ENCODE measurements at regions of chr13 and their contacts with region 1.

Region 1: DNA sequence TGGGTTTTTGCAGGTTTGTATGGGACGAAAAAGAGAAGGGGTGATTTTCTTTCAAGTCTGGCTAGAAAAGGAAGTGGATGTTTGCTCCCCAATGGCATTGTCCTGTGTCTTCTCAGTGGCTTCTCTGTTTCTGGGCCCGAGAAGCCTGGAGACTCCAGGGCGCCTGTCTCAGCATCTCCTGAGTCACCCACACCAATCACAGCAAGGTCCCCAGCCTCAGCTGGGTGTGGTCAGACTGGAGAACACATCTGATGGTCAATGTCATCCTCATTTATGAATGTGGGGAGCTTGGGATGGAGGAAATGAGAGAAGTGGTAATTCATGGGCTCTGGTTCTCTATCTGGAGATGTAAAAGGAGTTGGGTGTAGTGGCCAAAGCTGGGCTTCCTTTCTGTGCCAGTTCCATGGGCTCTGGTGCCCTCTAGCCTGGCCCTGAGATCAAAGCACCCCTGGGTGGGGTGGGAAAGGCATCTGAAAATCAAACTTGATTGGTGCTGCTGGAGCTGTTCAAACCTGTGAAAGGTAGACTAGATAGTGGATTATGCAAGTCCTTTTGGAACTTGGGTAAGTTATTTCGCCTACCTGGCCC is 13.4 kb downstream of the RASL11A start:
- DNase-seq: no peak
- H3K4me3 ChIP-seq: no peak overlapping the region
- H3K27me3 ChIP-seq: 0 out of 2 replicates have a peak, but pooled peaks cover 1% of the 10 kb centered on the region
- CTCF ChIP-seq: peak; percentile 57

Region 2: GRCh38 chr13:26946684-26947343 is 337.2 kb before region 1 on chr13:
- CTCF ChIA-PET with region 1: interaction called, 11 read pairs
- POLR2A ChIA-PET with region 1: no interaction called
- DNase-seq: no peak
- H3K4me3 ChIP-seq: no peak overlapping the region
- H3K27me3 ChIP-seq: 0 out of 2 replicates have a peak, but pooled peaks cover 1% of the 10 kb centered on the region
- CTCF ChIP-seq: peak; percentile 80

Region 3: GRCh38 chr13:27182844-27183497 is 101.0 kb before region 1 on chr13:
- CTCF ChIA-PET with region 1: no interaction called
- POLR2A ChIA-PET with region 1: no interaction called
- DNase-seq: peak; percentile 69
- H3K4me3 ChIP-seq: no peak overlapping the region
- H3K27me3 ChIP-seq: no peaks in the 10 kb centered on the region
- CTCF ChIP-seq: no peak

Region 4: GRCh38 chr13:27242706-27243105 is 41.3 kb before region 1 on chr13:
- CTCF ChIA-PET with region 1: no interaction called
- POLR2A ChIA-PET with region 1: no interaction called
- DNase-seq: no peak
- H3K4me3 ChIP-seq: no peak overlapping the region
- H3K27me3 ChIP-seq: no peaks in the 10 kb centered on the region
- CTCF ChIP-seq: no peak

Region 5: DNA sequence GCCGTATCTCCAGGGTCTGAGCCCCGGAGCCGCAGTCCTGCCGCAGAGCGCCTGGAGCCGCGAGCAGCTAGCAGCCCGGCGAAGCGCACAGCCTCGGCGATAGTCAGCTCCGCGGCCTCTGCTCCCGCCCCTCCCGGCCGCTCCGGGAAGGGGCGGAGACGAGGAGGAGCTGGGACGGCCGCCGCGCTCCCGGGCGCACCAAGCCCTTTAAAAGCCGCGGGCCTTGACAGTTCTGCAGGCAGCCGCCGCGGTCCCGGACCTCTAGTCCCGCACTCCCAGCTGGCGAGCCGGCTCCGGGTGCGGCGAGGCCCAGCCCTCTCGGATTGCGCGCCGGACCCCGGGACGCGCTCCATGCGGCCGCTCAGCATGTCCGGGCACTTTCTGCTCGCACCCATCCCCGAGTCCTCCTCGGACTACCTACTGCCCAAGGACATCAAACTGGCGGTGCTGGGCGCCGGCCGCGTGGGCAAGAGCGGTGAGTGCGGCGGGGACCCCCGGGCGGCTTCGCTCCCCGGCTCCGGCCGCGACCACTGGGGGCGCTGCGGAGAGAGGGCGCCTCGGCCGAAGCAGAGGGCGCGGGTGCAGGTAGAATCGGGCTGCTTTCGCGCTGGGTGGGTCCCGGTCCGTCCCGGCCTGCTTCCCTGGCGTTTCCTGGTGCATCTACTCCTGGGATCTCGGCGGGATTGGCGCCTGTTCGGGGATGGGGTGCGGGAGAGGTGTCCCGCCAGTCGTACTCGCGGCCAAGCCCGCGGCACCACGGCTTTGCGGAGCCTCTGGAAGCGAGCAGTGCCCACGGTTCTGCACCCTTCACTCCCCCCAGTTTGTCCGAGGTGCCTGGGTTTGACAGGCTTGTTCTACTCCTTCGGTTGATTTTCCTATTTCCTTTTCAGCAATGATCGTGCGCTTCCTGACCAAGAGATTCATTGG is 13.1 kb before region 1 on chr13 and contains the start of gene RASL11A:
- CTCF ChIA-PET with region 1: interaction called, 10 read pairs
- POLR2A ChIA-PET with region 1: no interaction called
- DNase-seq: no peak
- H3K4me3 ChIP-seq: peak within 1 kb of the TSS; percentile 82
- H3K27me3 ChIP-seq: no peaks in the 10 kb centered on the region
- CTCF ChIP-seq: peak; percentile 67
- polyA plus RNA-seq, gene RASL11A: 37.6 and 67.0 TPM in 2 replicates

Measured in BJ (cell line).